ENCODE measurements at regions of chr2 and their contacts with region 1.

Region 1: DNA sequence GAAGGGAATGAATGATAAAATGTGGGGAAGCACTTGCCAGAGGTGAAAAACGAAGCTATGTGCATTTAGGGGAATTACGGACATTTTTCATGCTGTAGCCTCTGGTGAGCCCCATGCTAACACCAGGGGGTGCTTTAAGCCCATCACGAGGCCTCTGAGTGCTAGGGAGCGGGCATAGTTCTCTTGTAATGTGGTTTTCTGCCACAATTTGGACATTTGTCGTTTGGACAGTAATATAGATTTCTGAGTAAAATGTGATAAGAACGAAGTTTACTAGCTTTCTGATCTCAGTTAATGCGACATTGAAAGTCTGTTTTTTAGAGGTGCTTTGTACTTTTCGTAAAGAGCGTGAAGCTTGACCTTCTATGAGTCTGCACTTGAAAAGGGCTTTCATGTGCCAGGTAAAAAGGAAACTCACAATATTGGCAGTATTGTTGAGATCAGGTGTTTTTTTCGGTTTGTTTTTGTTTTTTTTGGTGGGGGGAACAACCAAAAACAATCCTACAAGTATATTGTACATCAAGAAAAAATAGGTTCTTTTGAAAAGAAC is 50.6 kb downstream of the TRAF3IP1 start:
- DNase-seq: peak; percentile 53
- H3K4me3 ChIP-seq: no peak overlapping the region
- H3K27ac ChIP-seq: peak overlapping the region in 1 of 2 donors; percentile 16
- H3K4me1 ChIP-seq: no peaks in the 10 kb centered on the region
- H3K27me3 ChIP-seq: no peaks in the 10 kb centered on the region
- CTCF ChIP-seq: peak in 3 of 4 experiments; percentile 79 to 87 (median 82)
- POLR2A ChIP-seq: no peak

Region 2: GRCh38 chr2:238231251-238231793 is 139.6 kb before region 1 on chr2:
- intact Hi-C with region 1: no loop called
- DNase-seq: no peak
- H3K4me3 ChIP-seq: peak overlapping the region; percentile 24 to 37
- H3K27ac ChIP-seq: no peak overlapping the region
- H3K4me1 ChIP-seq: no peaks in the 10 kb centered on the region
- H3K27me3 ChIP-seq: no peaks in the 10 kb centered on the region
- CTCF ChIP-seq: no peak
- POLR2A ChIP-seq: no peak

Region 3: DNA sequence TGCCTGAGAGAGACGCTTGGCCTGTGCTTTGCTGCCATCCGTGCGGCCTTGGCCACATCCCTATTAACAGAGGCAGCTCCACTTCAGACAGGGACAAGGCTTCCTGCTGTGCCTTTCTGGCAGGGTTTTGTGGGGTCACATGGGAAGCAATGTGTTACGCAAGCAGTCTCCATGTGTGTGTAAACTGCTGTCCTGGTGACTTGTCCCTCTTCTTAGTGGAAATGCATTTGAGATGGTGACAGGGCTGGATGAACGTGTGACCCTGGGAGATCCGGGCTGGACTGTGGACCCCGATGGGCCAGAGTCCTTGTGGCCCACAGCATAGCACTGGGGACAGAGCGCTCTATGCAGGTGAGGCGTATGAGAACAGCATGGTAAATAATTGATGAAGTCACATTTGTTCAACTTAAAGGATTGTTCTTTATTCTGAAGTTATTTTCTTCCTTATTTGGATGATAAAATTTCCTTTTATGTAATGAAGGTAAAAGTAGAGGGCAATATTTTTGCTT is 79.1 kb after region 1 on chr2:
- intact Hi-C with region 1: loop called (anchors 5 kb)
- DNase-seq: peak; percentile 25
- H3K4me3 ChIP-seq: no peak overlapping the region
- H3K27ac ChIP-seq: no peak overlapping the region
- H3K4me1 ChIP-seq: no peaks in the 10 kb centered on the region
- H3K27me3 ChIP-seq: no peaks in the 10 kb centered on the region
- CTCF ChIP-seq: no peak
- POLR2A ChIP-seq: no peak

Region 4: DNA sequence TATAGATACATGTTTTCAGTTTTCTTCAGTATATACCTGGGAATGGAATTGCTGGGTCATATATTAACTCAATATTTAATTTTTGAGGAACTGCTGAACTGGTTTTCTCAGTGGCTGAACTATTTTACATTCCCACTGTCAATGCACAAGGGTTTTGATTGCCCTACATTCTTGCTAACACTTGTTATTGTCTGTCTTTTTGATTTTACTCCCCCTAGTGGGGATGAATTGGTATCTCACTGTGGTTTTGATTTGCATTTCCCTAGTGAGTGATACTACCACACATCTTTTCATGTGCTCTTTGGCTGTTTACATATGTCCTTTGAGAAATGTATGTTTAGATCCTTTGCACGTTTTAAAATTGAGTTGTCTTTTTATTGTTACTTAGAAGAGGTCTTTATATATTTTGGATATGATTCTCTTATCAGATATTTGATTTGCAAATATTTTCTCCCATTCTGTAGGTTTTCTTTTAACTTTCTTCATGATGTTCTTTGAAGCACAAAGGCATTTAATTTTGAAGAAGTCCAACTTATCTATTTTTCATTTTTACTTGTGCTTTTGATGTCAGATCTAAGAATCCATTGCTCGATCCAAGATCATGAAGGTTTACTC is 92.0 kb after region 1 on chr2:
- intact Hi-C with region 1: loop called (anchors 5 kb)
- DNase-seq: no peak
- H3K4me3 ChIP-seq: no peak overlapping the region
- H3K27ac ChIP-seq: no peak overlapping the region
- H3K4me1 ChIP-seq: peaks cover 6% of the 10 kb centered on the region
- H3K27me3 ChIP-seq: no peaks in the 10 kb centered on the region
- CTCF ChIP-seq: peak; percentile 31 to 81 (median 76)
- POLR2A ChIP-seq: no peak

Region 5: GRCh38 chr2:238523158-238524110 is 152.5 kb after region 1 on chr2:
- intact Hi-C with region 1: no loop called
- DNase-seq: peak; percentile 58
- H3K4me3 ChIP-seq: no peak overlapping the region
- H3K27ac ChIP-seq: peak overlapping the region in 1 of 2 donors; percentile 25
- H3K4me1 ChIP-seq: peaks cover 7% of the 10 kb centered on the region
- H3K27me3 ChIP-seq: no peaks in the 10 kb centered on the region
- CTCF ChIP-seq: peak in 3 of 4 experiments; percentile 18 to 49 (median 39)
- POLR2A ChIP-seq: no peak

Measured in prostate gland (tissue), 2 donors.